Naive thymus-derived CD4-positive, alpha-beta T cell (primary cell): ENCODE measurements at regions of chr19 and their contacts with region 1.

Region 1: DNA sequence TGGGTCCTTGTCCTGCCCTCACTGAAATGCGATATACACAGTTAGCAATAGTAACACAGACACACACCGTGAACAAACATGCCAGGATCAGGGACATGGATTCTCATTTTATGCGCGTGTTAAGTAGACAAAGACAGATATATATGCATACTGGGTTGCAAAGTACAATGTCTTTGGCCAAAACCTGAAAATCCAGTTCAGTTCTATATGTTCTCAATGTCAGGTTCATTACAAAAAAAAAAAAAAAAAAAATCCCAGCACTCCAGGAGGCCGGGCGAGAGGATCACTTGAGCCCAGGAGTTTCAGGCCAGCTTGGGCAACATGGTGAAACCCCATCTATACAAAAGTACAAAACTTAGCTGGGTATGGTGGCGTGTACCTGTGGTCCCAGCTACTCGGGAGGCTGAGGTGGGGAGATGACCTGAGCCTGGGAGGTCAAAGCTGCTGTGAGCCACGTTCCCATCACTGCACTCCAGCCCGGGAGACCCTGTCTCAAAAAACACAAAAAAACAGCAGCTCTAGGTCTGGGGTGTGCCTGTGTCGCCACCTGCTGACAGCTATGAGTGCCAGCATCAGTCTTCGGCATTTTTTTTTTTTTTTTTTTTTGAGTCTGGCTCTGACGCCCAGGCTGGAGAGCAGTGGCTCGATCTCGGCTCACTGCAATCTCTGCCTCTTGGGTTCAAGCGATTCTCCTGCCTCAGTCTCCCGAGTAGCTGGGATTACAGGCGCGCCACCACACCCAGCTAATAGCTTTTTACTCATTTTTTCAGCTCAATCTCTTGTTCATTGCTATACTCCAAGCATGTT is 10.3 kb downstream of the AP2S1 start:
- DNase-seq: peak in 8 of 9 donors; percentile 23 to 65 (median 51)
- ATAC-seq: peak; percentile 93
- H3K4me3 ChIP-seq: no peak overlapping the region
- H3K4me3 Mint-ChIP-seq: no peak overlapping the region
- H3K27ac ChIP-seq: no peak overlapping the region
- H3K27ac Mint-ChIP-seq: peak overlapping the region in 2 of 9 donors; percentile 9 to 57
- H3K4me1 ChIP-seq: no peaks in the 10 kb centered on the region
- H3K4me1 Mint-ChIP-seq: peaks cover 0 to 11% (median 0%) of the 10 kb centered on the region in 7 donors
- H3K27me3 ChIP-seq: no peaks in the 10 kb centered on the region
- H3K27me3 Mint-ChIP-seq: no peaks in the 10 kb centered on the region

Region 2: GRCh38 chr19:46239193-46240024 is 600.9 kb before region 1 on chr19:
- CTCF ChIA-PET with region 1: no interaction called
- POLR2A ChIA-PET with region 1: no interaction called
- intact Hi-C with region 1: no loop called
- DNase-seq: no peak
- ATAC-seq: no peak
- H3K4me3 ChIP-seq: no peak overlapping the region
- H3K4me3 Mint-ChIP-seq: no peak overlapping the region
- H3K27ac ChIP-seq: no peak overlapping the region
- H3K27ac Mint-ChIP-seq: no peak overlapping the region
- H3K4me1 ChIP-seq: no peaks in the 10 kb centered on the region
- H3K4me1 Mint-ChIP-seq: no peaks in the 10 kb centered on the region
- H3K27me3 ChIP-seq: no peaks in the 10 kb centered on the region
- H3K27me3 Mint-ChIP-seq: peaks cover 55 to 74% (median 61%) of the 10 kb centered on the region in 5 donors

Region 3: GRCh38 chr19:46704379-46705076 is 135.8 kb before region 1 on chr19:
- CTCF ChIA-PET with region 1: interaction called, 5 read pairs
- POLR2A ChIA-PET with region 1: no interaction called
- intact Hi-C with region 1: loop called in 1 of 2 experiments (anchors 1 kb)
- DNase-seq: peak; percentile 69 to 93 (median 82)
- ATAC-seq: peak; percentile 98
- H3K4me3 ChIP-seq: no peak overlapping the region
- H3K4me3 Mint-ChIP-seq: peak overlapping the region in 1 of 10 donors; percentile 35
- H3K27ac ChIP-seq: no peak overlapping the region
- H3K27ac Mint-ChIP-seq: peak overlapping the region; percentile 16 to 90 (median 68)
- H3K4me1 ChIP-seq: peaks cover 0 to 4% of the 10 kb centered on the region in 2 donors
- H3K4me1 Mint-ChIP-seq: peaks cover 7 to 17% (median 12%) of the 10 kb centered on the region in 7 donors
- H3K27me3 ChIP-seq: no peaks in the 10 kb centered on the region
- H3K27me3 Mint-ChIP-seq: no peaks in the 10 kb centered on the region

Region 4: GRCh38 chr19:46746281-46747013 is 93.9 kb before region 1 on chr19 and contains the start of gene STRN4:
- CTCF ChIA-PET with region 1: interaction called, 31 read pairs
- POLR2A ChIA-PET with region 1: interaction called, 3 read pairs
- intact Hi-C with region 1: loop called in 1 of 2 experiments (anchors 1 kb)
- DNase-seq: peak in 8 of 9 donors; percentile 29 to 65 (median 50)
- ATAC-seq: peak; percentile 87
- H3K4me3 ChIP-seq: peak within 1 kb of the TSS; percentile 73
- H3K4me3 Mint-ChIP-seq: peak within 1 kb of the TSS; percentile 84 to 97 (median 90)
- H3K27ac ChIP-seq: peak within 1 kb of the TSS; percentile 91
- H3K27ac Mint-ChIP-seq: peak within 1 kb of the TSS; percentile 74 to 94 (median 87)
- H3K4me1 ChIP-seq: peaks cover 21 to 26% of the 10 kb centered on the region in 2 donors
- H3K4me1 Mint-ChIP-seq: peaks cover 43 to 64% (median 58%) of the 10 kb centered on the region in 7 donors
- H3K27me3 ChIP-seq: no peaks in the 10 kb centered on the region
- H3K27me3 Mint-ChIP-seq: no peaks in the 10 kb centered on the region
- total RNA-seq, gene STRN4: 81.3 to 120 (median 90.4) TPM

Region 5: GRCh38 chr19:46766569-46767317 is 73.6 kb before region 1 on chr19:
- CTCF ChIA-PET with region 1: interaction called, 13 read pairs
- POLR2A ChIA-PET with region 1: no interaction called
- intact Hi-C with region 1: no loop called
- DNase-seq: peak in 7 of 9 donors; percentile 37 to 58 (median 46)
- ATAC-seq: peak; percentile 80
- H3K4me3 ChIP-seq: no peak overlapping the region
- H3K4me3 Mint-ChIP-seq: peak overlapping the region in 1 of 10 donors; percentile 46
- H3K27ac ChIP-seq: no peak overlapping the region
- H3K27ac Mint-ChIP-seq: peak overlapping the region in 2 of 9 donors; percentile 16 to 70
- H3K4me1 ChIP-seq: no peaks in the 10 kb centered on the region
- H3K4me1 Mint-ChIP-seq: peaks cover 0 to 7% (median 5%) of the 10 kb centered on the region in 7 donors
- H3K27me3 ChIP-seq: no peaks in the 10 kb centered on the region
- H3K27me3 Mint-ChIP-seq: no peaks in the 10 kb centered on the region

Region 6: DNA sequence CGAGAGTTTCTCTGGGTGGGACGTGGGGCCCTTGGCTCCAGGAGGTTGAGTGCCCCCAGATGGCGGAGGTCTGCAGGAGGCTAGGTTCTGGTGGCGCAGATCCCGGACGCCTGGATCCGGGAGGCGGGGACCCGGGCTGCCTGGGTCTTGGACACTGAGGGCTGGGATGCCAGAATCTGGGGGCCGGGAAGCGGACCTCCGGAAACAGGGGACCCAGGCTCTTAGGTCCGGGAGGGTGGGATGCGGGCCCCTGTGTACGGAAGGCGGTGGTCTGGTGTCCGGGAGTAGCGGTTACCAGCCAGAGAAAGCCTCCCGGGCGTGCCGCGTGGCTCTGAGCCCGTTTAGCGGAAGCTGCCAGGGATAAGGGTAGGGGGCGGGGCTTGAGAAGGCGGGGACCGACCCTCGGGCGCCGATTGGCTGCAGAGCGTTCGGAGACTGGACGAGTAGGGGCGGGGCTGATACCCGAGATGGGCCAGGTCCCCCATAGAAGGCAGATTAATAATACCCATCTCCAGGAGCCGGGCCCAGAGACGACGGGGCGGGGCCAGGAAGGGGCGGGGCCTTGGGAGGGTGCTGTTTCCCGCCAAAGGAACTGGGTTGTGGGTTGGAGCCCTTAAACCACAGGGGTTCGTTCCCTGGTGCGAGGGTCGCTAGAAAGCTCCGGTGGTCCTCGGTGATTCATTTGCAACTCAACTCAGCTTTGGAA is 51.9 kb before region 1 on chr19 and contains the start of gene SLC1A5:
- CTCF ChIA-PET with region 1: interaction called, 7 read pairs
- POLR2A ChIA-PET with region 1: interaction called, 3 read pairs
- intact Hi-C with region 1: loop called (anchors 1 to 2 kb)
- DNase-seq: peak; percentile 77 to 98 (median 84)
- ATAC-seq: peak; percentile 93
- H3K4me3 ChIP-seq: peak within 1 kb of the TSS; percentile 77
- H3K4me3 Mint-ChIP-seq: peak within 1 kb of the TSS; percentile 85 to 91 (median 89)
- H3K27ac ChIP-seq: peak within 1 kb of the TSS; percentile 62
- H3K27ac Mint-ChIP-seq: peak within 1 kb of the TSS; percentile 25 to 92 (median 86)
- H3K4me1 ChIP-seq: peaks cover 31 to 44% of the 10 kb centered on the region in 2 donors
- H3K4me1 Mint-ChIP-seq: peaks cover 19 to 72% (median 60%) of the 10 kb centered on the region in 7 donors
- H3K27me3 ChIP-seq: no peaks in the 10 kb centered on the region
- H3K27me3 Mint-ChIP-seq: peaks cover 0 to 3% (median 0%) of the 10 kb centered on the region in 5 donors
- total RNA-seq, gene SLC1A5: 3.5 to 120 (median 5.3) TPM

Region 7: GRCh38 chr19:46821498-46822409 is 18.6 kb before region 1 on chr19:
- CTCF ChIA-PET with region 1: interaction called, 16 read pairs
- POLR2A ChIA-PET with region 1: interaction called, 5 read pairs
- intact Hi-C with region 1: no loop called
- DNase-seq: peak; percentile 30 to 64 (median 55)
- ATAC-seq: peak; percentile 88
- H3K4me3 ChIP-seq: peak overlapping the region; percentile 19
- H3K4me3 Mint-ChIP-seq: peak overlapping the region; percentile 12 to 80 (median 63)
- H3K27ac ChIP-seq: peak overlapping the region; percentile 73
- H3K27ac Mint-ChIP-seq: peak overlapping the region; percentile 85 to 96 (median 93)
- H3K4me1 ChIP-seq: peaks cover 23 to 28% of the 10 kb centered on the region in 2 donors
- H3K4me1 Mint-ChIP-seq: peaks cover 21 to 47% (median 31%) of the 10 kb centered on the region in 7 donors
- H3K27me3 ChIP-seq: no peaks in the 10 kb centered on the region
- H3K27me3 Mint-ChIP-seq: no peaks in the 10 kb centered on the region